Left ventricle myocardium inferior (tissue), 1 donor: ENCODE measurements at regions of chr6 and their contacts with region 1.

Region 1: DNA sequence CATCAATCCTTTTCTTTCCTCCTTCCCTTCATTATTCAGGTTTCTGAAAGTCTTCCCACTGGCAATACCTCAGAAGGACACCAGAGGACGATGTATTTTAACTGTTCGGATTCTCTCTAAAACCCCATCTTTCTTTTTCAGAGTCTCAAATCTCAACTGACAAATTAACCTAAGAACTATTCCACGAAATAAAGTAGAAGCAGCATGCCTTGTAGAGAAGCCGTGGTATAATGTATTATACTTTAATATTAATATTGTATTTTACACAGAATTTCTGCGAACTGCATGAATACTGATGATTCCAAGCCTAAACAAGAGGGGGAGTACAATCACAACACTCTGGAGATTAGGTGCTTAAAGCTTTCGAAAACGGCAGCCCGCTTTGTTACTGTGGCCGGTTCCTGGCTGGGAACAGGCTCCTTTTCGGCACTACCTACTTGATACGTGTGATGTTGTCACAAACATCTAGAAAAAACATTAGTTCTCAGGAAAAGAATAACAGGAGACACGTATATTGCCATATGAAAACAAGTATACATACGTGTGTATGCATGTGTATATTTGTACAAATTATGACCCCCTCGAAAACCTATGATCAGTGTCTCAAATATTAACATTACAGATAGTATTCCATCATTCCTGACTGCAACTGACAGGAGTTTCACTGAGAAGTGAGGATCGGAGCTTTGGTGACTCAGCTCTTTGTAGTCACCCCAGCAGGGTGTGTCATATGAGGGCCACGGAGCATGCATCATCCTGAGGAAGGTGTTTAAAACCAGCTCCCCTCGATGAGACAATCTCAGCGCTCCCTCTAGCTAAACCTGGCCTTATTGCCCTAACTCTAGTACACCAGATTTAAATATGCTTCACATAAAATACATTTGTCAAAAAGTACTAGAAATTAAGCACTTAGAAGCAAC is 319.7 kb upstream of the TCF21 start:
- DNase-seq: no peak
- H3K4me3 ChIP-seq: peak overlapping the region; percentile 58
- H3K27ac ChIP-seq: peak overlapping the region; percentile 41
- H3K4me1 ChIP-seq: peaks cover 6% of the 10 kb centered on the region
- H3K27me3 ChIP-seq: no peaks in the 10 kb centered on the region
- CTCF ChIP-seq: peak; percentile 91

Region 2: GRCh38 chr6:133208183-133208755 is 361.0 kb before region 1 on chr6:
- intact Hi-C with region 1: no loop called
- DNase-seq: no peak
- H3K4me3 ChIP-seq: no peak overlapping the region
- H3K27ac ChIP-seq: no peak overlapping the region
- H3K4me1 ChIP-seq: peaks cover 10% of the 10 kb centered on the region
- H3K27me3 ChIP-seq: no peaks in the 10 kb centered on the region
- CTCF ChIP-seq: no peak

Region 3: DNA sequence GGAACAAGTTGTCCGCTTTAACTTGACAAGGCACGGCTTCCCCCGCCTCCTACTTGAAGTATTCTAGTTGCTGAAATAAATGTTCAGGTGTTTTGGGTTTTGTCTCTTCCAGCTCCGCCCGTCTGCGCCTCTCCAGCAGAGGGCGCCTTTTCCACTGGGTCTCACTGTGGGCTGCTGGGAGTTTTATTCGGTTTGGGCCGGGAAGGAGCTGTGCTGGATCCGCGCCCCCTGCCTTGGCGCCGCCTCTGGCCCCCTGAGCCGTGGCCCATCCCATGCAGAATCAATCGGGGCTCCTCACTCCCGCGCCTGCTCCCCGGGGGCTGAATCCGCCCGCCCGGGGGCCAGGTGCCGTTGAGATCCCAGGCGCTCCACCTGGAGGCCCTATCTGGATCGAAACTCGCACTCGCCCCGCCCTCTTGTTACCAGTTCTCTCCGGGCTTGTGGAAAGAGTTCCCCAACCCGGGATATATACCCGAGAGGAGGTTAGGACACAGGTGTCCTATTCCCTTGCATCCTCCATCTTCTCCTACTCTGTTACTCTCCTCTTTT is 268.6 kb after region 1 on chr6:
- intact Hi-C with region 1: loop called (anchors 5 kb)
- DNase-seq: peak; percentile 24
- H3K4me3 ChIP-seq: peak overlapping the region; percentile 57
- H3K27ac ChIP-seq: no peak overlapping the region
- H3K4me1 ChIP-seq: peaks cover 5% of the 10 kb centered on the region
- H3K27me3 ChIP-seq: peaks cover 36% of the 10 kb centered on the region
- CTCF ChIP-seq: peak; percentile 64